ENCODE measurements at regions of chr2 and their contacts with region 1.

Region 1: DNA sequence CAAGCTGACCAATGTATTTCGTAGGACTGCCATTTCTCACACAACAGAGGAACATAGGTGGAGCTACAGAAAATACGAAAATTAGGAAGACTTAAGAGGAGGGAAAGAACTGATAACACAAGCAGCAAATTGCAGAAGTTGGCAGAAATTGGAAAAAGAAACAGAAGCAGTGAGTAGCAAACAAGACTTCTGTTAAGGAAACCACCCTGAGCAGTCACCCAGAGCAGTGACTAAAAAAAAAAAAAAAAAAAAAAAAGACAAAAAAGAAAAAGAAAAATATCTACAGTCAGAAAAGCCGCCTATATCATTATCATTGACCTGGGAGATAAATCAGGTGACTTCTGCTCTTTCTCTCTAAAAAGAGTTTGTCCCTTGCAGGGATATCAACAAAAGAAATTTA is 21.4 kb downstream of the STK17B start:
- DNase-seq: no peak
- H3K4me3 Mint-ChIP-seq: peak overlapping the region; percentile 65
- H3K27ac Mint-ChIP-seq: peak overlapping the region; percentile 77
- H3K4me1 Mint-ChIP-seq: peaks cover 91% of the 10 kb centered on the region
- H3K27me3 Mint-ChIP-seq: no peaks in the 10 kb centered on the region

Region 2: GRCh38 chr2:195848156-195848899 is 301.6 kb before region 1 on chr2:
- intact Hi-C with region 1: no loop called
- DNase-seq: no peak
- H3K4me3 Mint-ChIP-seq: no peak overlapping the region
- H3K27ac Mint-ChIP-seq: no peak overlapping the region
- H3K4me1 Mint-ChIP-seq: no peaks in the 10 kb centered on the region
- H3K27me3 Mint-ChIP-seq: no peaks in the 10 kb centered on the region

Region 3: DNA sequence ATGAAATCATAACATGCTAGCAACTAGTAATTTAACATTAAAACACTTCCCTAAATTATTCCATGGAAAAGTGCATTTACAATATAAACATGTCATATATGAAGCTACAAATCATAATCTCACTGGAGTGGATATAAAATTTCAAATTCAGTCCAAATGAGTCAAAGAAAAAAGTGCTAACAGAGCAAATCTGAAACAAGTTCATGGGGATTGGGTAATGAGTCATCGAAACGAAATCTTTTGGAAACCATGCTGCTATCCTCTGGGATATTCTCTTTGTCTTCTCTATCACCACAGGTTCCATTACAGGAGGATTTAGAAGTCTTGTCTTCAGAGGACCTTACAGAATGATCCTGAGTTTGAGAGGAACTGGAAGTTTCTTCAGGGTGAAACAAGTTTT is 12.7 kb before region 1 on chr2:
- intact Hi-C with region 1: loop called (anchors 1 kb)
- DNase-seq: no peak
- H3K4me3 Mint-ChIP-seq: no peak overlapping the region
- H3K27ac Mint-ChIP-seq: no peak overlapping the region
- H3K4me1 Mint-ChIP-seq: peaks cover 41% of the 10 kb centered on the region
- H3K27me3 Mint-ChIP-seq: no peaks in the 10 kb centered on the region